ENCODE measurements at regions of chr6 and their contacts with region 1.

Region 1: GRCh38 chr6:37607944-37608343 is 89.7 kb downstream of the MDGA1 start:
- DNase-seq: no peak
- H3K4me3 ChIP-seq: no peak overlapping the region
- CTCF ChIP-seq: peak; percentile 46

Region 2: GRCh38 chr6:37594895-37595294 is 13.0 kb before region 1 on chr6:
- CTCF ChIA-PET with region 1: interaction called, 10 read pairs
- POLR2A ChIA-PET with region 1: no interaction called
- DNase-seq: no peak
- H3K4me3 ChIP-seq: no peak overlapping the region
- CTCF ChIP-seq: no peak

Region 3: DNA sequence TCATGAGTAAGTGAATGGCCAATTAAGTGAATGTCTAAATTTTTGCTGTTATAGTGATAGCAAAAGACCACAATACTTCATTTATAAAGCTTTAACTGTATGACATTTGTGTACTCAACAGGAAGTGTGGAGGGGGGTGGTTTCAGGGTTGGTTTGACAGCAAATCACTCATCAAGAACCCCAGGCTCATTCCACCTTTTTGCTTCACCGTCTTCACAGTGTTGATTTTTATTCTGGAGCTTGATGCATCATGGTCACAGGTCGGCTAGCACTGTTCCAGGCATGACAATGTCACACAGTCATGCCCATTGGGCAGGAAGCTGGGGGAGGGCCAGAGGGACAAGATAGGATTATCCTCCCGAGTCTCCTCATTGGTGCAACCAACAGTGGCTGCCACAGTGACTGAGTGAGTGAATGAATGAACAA is 14.7 kb after region 1 on chr6:
- CTCF ChIA-PET with region 1: interaction called, 29 read pairs
- POLR2A ChIA-PET with region 1: no interaction called
- DNase-seq: no peak
- H3K4me3 ChIP-seq: no peak overlapping the region
- CTCF ChIP-seq: no peak